ENCODE measurements at regions of chr5 and their contacts with region 1.

Region 1: DNA sequence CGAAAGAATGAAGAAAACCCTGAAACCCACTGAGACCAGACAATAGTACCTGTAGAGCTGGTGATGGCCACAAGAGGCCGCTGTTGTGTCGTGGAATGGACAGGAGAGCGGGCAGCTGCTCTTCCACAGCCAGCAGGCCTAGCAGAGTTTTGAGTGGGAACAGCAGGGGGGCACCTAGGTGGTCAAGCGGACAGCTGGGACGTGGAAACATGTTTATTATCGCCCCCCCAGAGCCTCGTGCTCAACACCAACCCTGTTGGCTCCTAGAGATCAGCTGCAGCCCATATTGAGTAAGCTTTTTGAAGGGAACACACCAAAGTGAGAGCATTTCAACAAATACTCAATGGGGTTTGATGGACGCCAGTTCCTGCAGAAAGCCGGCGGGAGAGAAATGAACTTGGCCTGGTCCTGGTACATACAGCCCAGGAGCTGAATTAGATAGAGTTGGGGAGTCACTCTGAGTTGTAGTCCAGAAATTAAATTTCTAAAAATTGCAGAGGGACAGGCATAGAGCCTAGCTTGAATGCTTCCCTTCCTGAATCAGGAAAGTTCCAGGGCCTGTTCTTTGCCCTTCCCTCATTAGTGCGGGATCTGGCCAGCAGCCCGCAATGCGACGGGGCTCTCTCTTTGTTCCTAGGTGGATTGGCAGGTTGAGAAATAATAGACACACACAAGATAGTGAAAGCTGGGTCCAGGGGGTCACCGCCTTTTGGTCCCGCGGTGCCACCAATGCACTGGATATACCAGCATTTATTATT is 33.8 kb downstream of the MFAP3 start:
- DNase-seq: peak; percentile 72 to 82
- H3K4me3 ChIP-seq: no peak overlapping the region
- H3K4me3 Mint-ChIP-seq: no peak overlapping the region
- H3K27ac Mint-ChIP-seq: no peak overlapping the region
- H3K4me1 ChIP-seq: no peaks in the 10 kb centered on the region
- H3K4me1 Mint-ChIP-seq: peaks cover 7% of the 10 kb centered on the region
- H3K27me3 ChIP-seq: no peaks in the 10 kb centered on the region
- H3K27me3 Mint-ChIP-seq: peaks cover 5% of the 10 kb centered on the region
- CTCF ChIP-seq: peak; percentile 89 to 98

Region 2: DNA sequence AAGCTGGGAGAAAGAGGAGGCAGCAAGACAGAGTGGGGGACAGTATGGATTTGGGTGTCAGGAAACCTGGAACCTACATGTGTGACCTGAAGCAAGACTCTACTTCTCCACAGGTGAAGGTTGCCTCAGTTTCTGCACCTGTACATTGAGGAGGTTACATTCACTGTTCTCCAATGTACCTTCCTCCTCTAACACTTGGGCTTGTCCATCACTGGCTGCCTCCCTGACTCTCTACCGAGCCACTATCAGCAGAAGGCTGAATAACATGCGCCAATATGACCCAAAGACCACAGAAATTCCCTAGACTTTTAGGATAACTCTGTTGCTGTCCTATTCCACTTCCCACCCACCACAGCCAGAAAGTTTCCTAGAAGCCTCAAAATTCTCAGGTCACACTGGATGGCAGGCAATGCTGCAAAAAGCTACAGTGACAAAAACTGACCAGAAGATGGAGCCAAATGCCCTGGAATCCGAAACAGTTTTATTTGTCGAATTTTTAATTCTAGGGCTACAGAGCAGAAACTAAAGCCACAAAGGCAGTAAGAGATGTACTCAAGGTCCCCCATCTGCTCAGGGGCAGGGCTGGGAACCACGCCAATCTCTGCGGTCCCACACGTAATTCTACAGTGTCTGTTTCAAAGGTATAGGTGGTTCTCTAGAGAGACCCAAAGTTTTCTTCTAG is 98.3 kb before region 1 on chr5:
- CTCF ChIA-PET with region 1: interaction called, 8 read pairs
- POLR2A ChIA-PET with region 1: no interaction called
- intact Hi-C with region 1: loop called (anchors 1 kb)
- DNase-seq: peak in 1 of 2 experiments; percentile 52
- H3K4me3 ChIP-seq: no peak overlapping the region
- H3K4me3 Mint-ChIP-seq: no peak overlapping the region
- H3K27ac Mint-ChIP-seq: no peak overlapping the region
- H3K4me1 ChIP-seq: no peaks in the 10 kb centered on the region
- H3K4me1 Mint-ChIP-seq: no peaks in the 10 kb centered on the region
- H3K27me3 ChIP-seq: no peaks in the 10 kb centered on the region
- H3K27me3 Mint-ChIP-seq: peaks cover 11% of the 10 kb centered on the region
- CTCF ChIP-seq: peak; percentile 80 to 81

Region 3: DNA sequence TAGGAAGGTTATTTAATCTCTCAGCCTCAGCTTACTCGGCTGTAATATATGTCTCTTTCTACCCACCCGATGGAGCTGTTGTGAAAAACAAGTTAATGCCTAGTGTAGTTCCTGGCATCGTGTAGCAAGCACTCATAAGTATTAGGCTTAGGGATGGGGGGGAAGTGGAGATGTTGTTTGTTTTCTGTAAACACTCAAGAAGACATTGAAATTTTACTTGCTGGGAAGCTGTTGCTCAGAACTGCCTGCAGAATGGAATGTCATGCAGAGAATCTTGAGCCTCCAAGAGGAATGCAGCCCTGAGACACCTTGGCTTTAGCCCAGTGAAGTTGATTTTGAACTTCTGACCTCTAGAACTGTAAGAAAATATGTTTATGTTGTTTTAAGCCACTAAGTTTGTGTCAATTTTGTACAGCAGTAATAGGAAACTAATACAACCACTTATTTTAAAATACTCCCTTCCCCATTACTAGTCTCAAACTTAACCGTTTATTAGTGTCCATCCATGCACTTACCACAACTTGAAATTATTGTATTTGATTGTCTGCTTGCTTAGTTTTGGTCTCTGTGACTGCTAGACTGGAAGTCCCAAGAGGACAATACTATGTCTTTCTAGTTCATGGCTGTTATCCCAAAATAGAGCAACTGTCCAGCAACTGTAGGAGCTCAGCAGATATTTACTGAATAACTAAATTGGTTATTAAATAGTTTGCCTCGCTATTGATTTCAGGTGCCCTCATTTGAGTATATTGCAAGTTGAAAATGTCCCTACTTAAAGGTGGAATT is 20.0 kb after region 1 on chr5:
- CTCF ChIA-PET with region 1: no interaction called
- POLR2A ChIA-PET with region 1: no interaction called
- intact Hi-C with region 1: no loop called
- DNase-seq: no peak
- H3K4me3 ChIP-seq: no peak overlapping the region
- H3K4me3 Mint-ChIP-seq: no peak overlapping the region
- H3K27ac Mint-ChIP-seq: no peak overlapping the region
- H3K4me1 ChIP-seq: no peaks in the 10 kb centered on the region
- H3K4me1 Mint-ChIP-seq: no peaks in the 10 kb centered on the region
- H3K27me3 ChIP-seq: no peaks in the 10 kb centered on the region
- H3K27me3 Mint-ChIP-seq: peaks cover 16% of the 10 kb centered on the region
- CTCF ChIP-seq: no peak

Region 4: GRCh38 chr5:154179846-154180710 is 107.5 kb after region 1 on chr5:
- CTCF ChIA-PET with region 1: interaction called, 14 read pairs
- POLR2A ChIA-PET with region 1: no interaction called
- intact Hi-C with region 1: loop called (anchors 1 kb)
- DNase-seq: peak; percentile 45 to 53
- H3K4me3 ChIP-seq: no peak overlapping the region
- H3K4me3 Mint-ChIP-seq: no peak overlapping the region
- H3K27ac Mint-ChIP-seq: no peak overlapping the region
- H3K4me1 ChIP-seq: no peaks in the 10 kb centered on the region
- H3K4me1 Mint-ChIP-seq: no peaks in the 10 kb centered on the region
- H3K27me3 ChIP-seq: no peaks in the 10 kb centered on the region
- H3K27me3 Mint-ChIP-seq: peaks cover 9% of the 10 kb centered on the region
- CTCF ChIP-seq: peak; percentile 64 to 86

Region 5: DNA sequence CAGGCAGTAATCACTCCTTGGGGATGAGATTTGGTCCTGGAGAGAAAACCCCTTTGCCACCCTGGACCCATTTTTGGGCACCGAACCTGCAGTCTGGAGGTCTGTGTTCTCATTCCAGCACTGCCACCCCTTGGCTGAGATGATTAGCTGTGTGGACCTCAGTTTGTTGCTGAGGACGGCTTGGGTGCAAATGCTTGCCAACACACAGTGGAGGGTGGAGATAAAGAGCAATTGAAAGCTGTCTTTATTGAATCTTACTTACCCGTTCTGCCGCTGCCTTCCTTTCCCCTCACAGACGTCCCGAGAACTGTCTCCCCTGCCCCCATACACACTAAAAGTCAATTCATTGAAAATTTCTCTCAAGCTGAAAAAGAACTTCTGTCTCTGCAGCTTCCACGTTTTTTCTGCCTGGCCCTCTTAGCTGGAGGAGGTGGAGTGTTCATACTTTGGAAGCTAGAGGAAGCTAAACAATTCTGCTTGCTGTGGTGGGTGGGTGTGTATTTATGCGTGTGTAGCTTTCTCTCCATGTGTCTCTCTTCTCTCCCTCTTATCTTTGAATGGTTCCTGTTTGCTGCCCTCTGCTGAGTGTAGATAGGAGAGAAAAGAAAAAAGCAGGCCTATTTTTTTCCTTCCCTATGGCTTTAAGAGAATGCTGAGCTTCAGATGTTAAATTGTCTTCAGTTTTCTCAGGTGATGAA is 124.5 kb after region 1 on chr5:
- CTCF ChIA-PET with region 1: interaction called, 19 read pairs
- POLR2A ChIA-PET with region 1: no interaction called
- intact Hi-C with region 1: loop called (anchors 1 kb)
- DNase-seq: peak in 1 of 2 experiments; percentile 23
- H3K4me3 ChIP-seq: no peak overlapping the region
- H3K4me3 Mint-ChIP-seq: no peak overlapping the region
- H3K27ac Mint-ChIP-seq: no peak overlapping the region
- H3K4me1 ChIP-seq: peaks cover 5% of the 10 kb centered on the region; the same call in 1 of the 2 replicates
- H3K4me1 Mint-ChIP-seq: peaks cover 29% of the 10 kb centered on the region
- H3K27me3 ChIP-seq: no peaks in the 10 kb centered on the region
- H3K27me3 Mint-ChIP-seq: no peaks in the 10 kb centered on the region
- CTCF ChIP-seq: peak in 1 of 2 experiments; percentile 47

Region 6: DNA sequence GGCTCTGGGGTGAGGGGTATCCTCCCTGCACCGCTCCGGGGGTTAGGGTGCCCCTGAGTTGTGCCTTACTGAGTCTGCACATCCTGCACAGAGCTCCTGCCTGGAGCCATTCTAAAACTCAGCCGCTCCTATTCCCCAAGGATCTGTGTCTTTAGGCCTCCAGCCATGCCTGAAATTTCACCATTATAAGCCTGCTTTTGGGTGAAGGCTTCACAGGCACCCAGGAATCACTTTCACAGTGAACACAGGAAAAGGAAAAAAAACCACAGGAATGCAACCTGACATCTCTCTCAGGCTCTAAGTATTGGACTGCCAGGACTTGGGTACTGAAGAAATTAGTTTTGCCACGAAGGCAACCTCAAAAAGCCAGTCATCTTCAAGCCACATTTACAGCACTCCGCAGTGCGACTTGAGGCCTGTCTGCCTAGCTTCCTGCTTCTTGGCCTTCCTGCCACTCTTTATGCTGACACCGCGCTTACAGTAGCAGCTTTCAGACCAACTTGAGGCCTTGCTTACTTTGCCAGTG is 148.8 kb after region 1 on chr5:
- CTCF ChIA-PET with region 1: no interaction called
- POLR2A ChIA-PET with region 1: no interaction called
- intact Hi-C with region 1: no loop called
- DNase-seq: no peak
- H3K4me3 ChIP-seq: no peak overlapping the region
- H3K4me3 Mint-ChIP-seq: no peak overlapping the region
- H3K27ac Mint-ChIP-seq: no peak overlapping the region
- H3K4me1 ChIP-seq: no peaks in the 10 kb centered on the region
- H3K4me1 Mint-ChIP-seq: no peaks in the 10 kb centered on the region
- H3K27me3 ChIP-seq: no peaks in the 10 kb centered on the region
- H3K27me3 Mint-ChIP-seq: no peaks in the 10 kb centered on the region
- CTCF ChIP-seq: no peak

Region 7: GRCh38 chr5:154405078-154405792 is 332.6 kb after region 1 on chr5:
- CTCF ChIA-PET with region 1: interaction called, 33 read pairs
- POLR2A ChIA-PET with region 1: no interaction called
- intact Hi-C with region 1: loop called (anchors 1 kb)
- DNase-seq: peak; percentile 80 to 85
- H3K4me3 ChIP-seq: 0 out of 2 replicates have a peak overlapping the region, but pooled peaks have one; percentile 0
- H3K4me3 Mint-ChIP-seq: peak overlapping the region; percentile 54
- H3K27ac Mint-ChIP-seq: no peak overlapping the region
- H3K4me1 ChIP-seq: peaks cover 5% of the 10 kb centered on the region
- H3K4me1 Mint-ChIP-seq: peaks cover 9% of the 10 kb centered on the region
- H3K27me3 ChIP-seq: no peaks in the 10 kb centered on the region
- H3K27me3 Mint-ChIP-seq: no peaks in the 10 kb centered on the region
- CTCF ChIP-seq: peak; percentile 83 to 92

Region 8: GRCh38 chr5:154610321-154611154 is 537.9 kb after region 1 on chr5:
- CTCF ChIA-PET with region 1: no interaction called
- POLR2A ChIA-PET with region 1: no interaction called
- intact Hi-C with region 1: loop called (anchors 1 kb)
- DNase-seq: peak; percentile 82 to 84
- H3K4me3 ChIP-seq: peak overlapping the region; percentile 33
- H3K4me3 Mint-ChIP-seq: peak overlapping the region; percentile 60
- H3K27ac Mint-ChIP-seq: no peak overlapping the region
- H3K4me1 ChIP-seq: peaks cover 19% of the 10 kb centered on the region
- H3K4me1 Mint-ChIP-seq: peaks cover 18% of the 10 kb centered on the region
- H3K27me3 ChIP-seq: no peaks in the 10 kb centered on the region; the same call in 1 of the 2 replicates
- H3K27me3 Mint-ChIP-seq: peaks cover 8% of the 10 kb centered on the region
- CTCF ChIP-seq: peak; percentile 95 to 99

Measured in Caco-2 (cell line).